Stomach (tissue), 19 donors: ENCODE measurements at regions of chr5 and their contacts with region 1.

Region 1: DNA sequence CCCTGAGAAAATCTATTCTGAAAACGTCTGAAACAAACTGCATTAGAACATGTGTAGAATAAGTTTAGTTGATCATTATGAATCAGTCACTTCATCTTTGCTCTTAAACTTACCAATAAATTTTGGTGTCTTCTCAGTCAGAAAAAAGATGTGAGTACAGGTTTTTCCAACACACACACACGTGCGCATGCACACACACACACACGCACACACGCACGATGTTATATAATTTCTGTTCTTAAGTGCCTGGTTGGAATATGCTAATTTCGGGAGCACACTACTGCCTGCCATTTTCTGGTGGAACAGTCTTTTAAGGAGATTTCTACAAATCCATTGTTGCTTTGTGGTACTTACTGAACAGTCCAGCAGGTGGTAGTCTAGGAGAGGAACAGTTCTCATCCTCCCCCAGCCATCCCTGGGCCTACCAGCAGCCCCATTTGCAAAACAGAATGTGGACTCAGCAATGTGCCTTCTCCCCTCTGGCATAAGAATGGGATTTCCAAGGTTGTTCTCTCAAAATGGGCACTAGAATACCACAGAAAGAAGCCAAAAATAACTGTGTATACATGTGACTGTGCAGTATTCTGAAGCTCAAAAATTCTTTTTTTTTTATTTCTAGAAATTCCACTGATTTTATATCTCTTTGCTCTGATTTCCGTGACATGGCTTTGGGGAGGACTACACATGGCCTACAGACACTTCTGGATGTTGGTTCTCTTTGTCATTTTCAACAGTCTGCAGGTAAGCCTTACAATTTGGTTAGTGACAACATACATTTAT is 281.3 kb downstream of the ARRDC3 start:
- DNase-seq: peak; percentile 65 to 91
- H3K4me3 ChIP-seq: no peak overlapping the region
- H3K27ac ChIP-seq: no peak overlapping the region
- H3K4me1 ChIP-seq: peaks cover 0 to 22% (median 6%) of the 10 kb centered on the region in 4 donors
- H3K27me3 ChIP-seq: no peaks in the 10 kb centered on the region
- CTCF ChIP-seq: peak in 5 of 7 experiments; percentile 67 to 88 (median 76)
- EP300 ChIP-seq: no peak
- POLR2A ChIP-seq: no peak

Region 2: GRCh38 chr5:90878549-90879196 is 223.1 kb before region 1 on chr5:
- intact Hi-C with region 1: loop called (anchors 5 kb)
- DNase-seq: peak in 1 of 2 donors; percentile 66
- H3K4me3 ChIP-seq: no peak overlapping the region
- H3K27ac ChIP-seq: peak overlapping the region in 4 of 5 donors; percentile 48 to 68 (median 63)
- H3K4me1 ChIP-seq: peaks cover 8 to 40% (median 17%) of the 10 kb centered on the region in 4 donors
- H3K27me3 ChIP-seq: no peaks in the 10 kb centered on the region
- CTCF ChIP-seq: no peak
- EP300 ChIP-seq: no peak
- POLR2A ChIP-seq: no peak

Region 3: DNA sequence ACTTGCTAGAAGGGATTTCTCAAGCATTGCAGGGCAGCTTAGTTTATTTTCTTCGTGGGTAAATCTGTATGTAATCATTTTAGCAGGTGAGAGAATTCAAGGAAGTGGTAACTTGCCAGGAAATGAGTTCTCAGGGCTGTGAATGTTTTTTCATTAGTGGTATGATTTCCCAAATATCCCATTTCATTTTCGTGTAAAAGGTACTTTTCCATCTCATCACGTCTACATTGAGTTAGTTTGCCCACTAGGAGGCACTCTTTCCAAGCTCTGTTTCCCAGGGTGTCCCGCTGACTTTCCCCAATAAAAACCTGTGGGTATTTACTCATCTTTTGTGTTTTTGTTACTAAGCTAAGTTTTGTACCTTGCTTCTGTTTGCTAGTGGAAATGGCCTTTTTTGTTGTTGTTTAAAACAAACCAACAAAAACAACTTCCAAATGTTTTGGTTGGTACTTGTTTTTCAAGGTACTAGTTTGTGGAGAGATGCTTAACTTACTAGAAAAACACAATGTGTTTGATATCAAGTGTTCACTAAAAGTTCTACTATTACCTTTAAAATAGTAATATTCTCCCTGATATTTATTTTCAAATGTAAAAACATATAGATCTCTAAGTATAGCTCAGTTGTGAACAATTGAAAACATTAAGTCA is 169.6 kb before region 1 on chr5:
- intact Hi-C with region 1: loop called (anchors 10 kb)
- DNase-seq: peak; percentile 29 to 86
- H3K4me3 ChIP-seq: no peak overlapping the region
- H3K27ac ChIP-seq: peak overlapping the region in 3 of 5 donors; percentile 6 to 34 (median 33)
- H3K4me1 ChIP-seq: peaks cover 0 to 22% (median 13%) of the 10 kb centered on the region in 4 donors
- H3K27me3 ChIP-seq: no peaks in the 10 kb centered on the region
- CTCF ChIP-seq: peak in 5 of 7 experiments; percentile 52 to 75 (median 63)
- EP300 ChIP-seq: no peak
- POLR2A ChIP-seq: no peak

Region 4: GRCh38 chr5:91383027-91383955 is 281.5 kb after region 1 on chr5 and contains the start of gene ARRDC3:
- intact Hi-C with region 1: loop called (anchors 10 kb)
- DNase-seq: peak; percentile 98 to 99
- H3K4me3 ChIP-seq: peak within 1 kb of the TSS; percentile 63 to 76 (median 70)
- H3K27ac ChIP-seq: peak within 1 kb of the TSS; percentile 96 to 100 (median 99)
- H3K4me1 ChIP-seq: peaks cover 0 to 25% (median 10%) of the 10 kb centered on the region in 4 donors
- H3K27me3 ChIP-seq: no peaks in the 10 kb centered on the region
- CTCF ChIP-seq: peak in 1 of 7 experiments; percentile 8
- EP300 ChIP-seq: no peak
- POLR2A ChIP-seq: peak in 2 of 4 donors; percentile 78 to 94
- total RNA-seq, gene ARRDC3: 8.7 to 188 (median 44.6) TPM